Dendritic cell treated with granulocyte-macrophage colony-stimulating factor and Interleukin-4, amounts not matched to agents 40 ng/mL and 50 ng/mL, for 4 days (primary cell): ENCODE measurements at regions of chr2 and their contacts with region 1.

Region 1: GRCh38 chr2:152036611-152037469 is 62.0 kb downstream of the CACNB4 start:
- H3K4me3 Mint-ChIP-seq: no peak overlapping the region
- H3K27ac Mint-ChIP-seq: no peak overlapping the region
- H3K4me1 Mint-ChIP-seq: peaks cover 41% of the 10 kb centered on the region
- H3K27me3 Mint-ChIP-seq: no peaks in the 10 kb centered on the region

Region 2: DNA sequence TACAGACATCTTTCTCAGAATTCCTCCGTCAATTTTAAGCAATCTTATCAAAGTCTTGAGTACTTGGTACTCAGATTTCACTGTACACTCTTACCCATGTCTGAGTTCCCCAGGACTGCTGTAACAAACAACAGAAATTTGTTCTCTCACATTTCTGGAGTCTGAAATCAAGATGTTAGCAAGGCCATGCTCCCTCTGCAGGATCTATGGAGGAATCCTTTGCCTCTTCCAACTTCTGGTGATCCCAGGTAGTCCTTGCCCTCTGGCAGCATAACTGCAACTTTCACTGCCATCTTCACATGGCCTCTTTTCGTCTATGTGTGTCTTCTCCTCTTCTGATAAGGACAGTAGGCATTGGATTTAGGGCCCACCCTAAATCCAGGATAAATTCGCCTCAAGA is 79.1 kb after region 1 on chr2:
- intact Hi-C with region 1: loop called (anchors 5 kb)
- H3K4me3 Mint-ChIP-seq: no peak overlapping the region
- H3K27ac Mint-ChIP-seq: no peak overlapping the region
- H3K4me1 Mint-ChIP-seq: peaks cover 5% of the 10 kb centered on the region
- H3K27me3 Mint-ChIP-seq: no peaks in the 10 kb centered on the region

Region 3: DNA sequence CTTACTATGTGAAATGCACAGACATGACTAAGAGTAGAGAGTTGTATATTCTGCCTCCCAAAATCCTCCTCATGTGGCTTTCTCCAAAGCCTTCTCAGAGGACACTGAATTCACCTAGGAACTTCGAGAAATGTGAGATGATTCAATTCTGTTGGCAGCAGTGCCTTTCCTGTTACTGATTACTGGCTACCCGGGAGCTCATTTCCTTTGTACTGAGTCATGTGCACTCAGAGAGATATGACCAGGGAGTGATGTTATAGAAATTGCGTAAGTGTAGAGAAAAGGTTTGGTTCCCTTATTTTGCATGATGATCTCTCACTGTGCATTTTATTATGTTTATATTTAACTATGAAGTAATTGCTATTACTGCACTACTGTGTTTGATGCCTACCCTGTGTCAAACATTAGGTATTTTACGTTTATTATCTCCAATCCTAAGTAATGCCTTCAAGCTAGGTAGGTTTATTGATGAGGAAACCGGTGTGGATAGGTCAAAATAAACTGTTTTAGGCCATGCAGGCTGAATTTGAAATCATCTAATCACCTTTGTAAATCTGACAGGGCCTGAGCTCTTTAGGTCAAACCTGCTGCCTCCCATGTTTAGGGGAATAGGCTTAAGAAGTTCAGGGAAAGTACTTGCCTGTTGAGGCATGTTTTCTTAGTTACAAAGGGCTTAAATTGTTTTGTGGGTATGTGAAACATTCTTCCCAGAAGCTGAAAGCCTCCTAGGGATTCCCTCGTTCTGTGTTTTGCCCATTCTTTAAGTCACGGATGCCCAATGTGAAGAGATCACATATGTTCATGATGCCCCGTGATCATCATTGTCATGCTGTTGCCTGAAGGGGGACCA is 384.9 kb after region 1 on chr2:
- intact Hi-C with region 1: loop called (anchors 10 kb)
- H3K4me3 Mint-ChIP-seq: peak overlapping the region; percentile 26
- H3K27ac Mint-ChIP-seq: peak overlapping the region; percentile 88
- H3K4me1 Mint-ChIP-seq: peaks cover 55% of the 10 kb centered on the region
- H3K27me3 Mint-ChIP-seq: no peaks in the 10 kb centered on the region

Region 4: GRCh38 chr2:152627351-152627957 is 590.6 kb after region 1 on chr2:
- intact Hi-C with region 1: loop called (anchors 5 kb)
- H3K4me3 Mint-ChIP-seq: no peak overlapping the region
- H3K27ac Mint-ChIP-seq: no peak overlapping the region
- H3K4me1 Mint-ChIP-seq: peaks cover 8% of the 10 kb centered on the region
- H3K27me3 Mint-ChIP-seq: no peaks in the 10 kb centered on the region

Region 5: GRCh38 chr2:152717228-152718075 is 680.6 kb after region 1 on chr2 and contains the start of gene PRPF40A:
- intact Hi-C with region 1: loop called (anchors 10 kb)
- H3K4me3 Mint-ChIP-seq: peak within 1 kb of the TSS; percentile 92
- H3K27ac Mint-ChIP-seq: peak within 1 kb of the TSS; percentile 96
- H3K4me1 Mint-ChIP-seq: peaks cover 31% of the 10 kb centered on the region
- H3K27me3 Mint-ChIP-seq: no peaks in the 10 kb centered on the region